ENCODE measurements at regions of chr4 and their contacts with region 1.

Region 1: GRCh38 chr4:99847362-99847976 is 30.8 kb downstream of the DAPP1 start:
- DNase-seq: peak in 1 of 35 experiments; percentile 49
- ATAC-seq: peak in 3 of 4 experiments; percentile 44 to 60 (median 59)
- H3K4me3 ChIP-seq: no peak overlapping the region
- H3K4me3 Mint-ChIP-seq: peak overlapping the region; percentile 43 to 61 (median 50)
- H3K27ac ChIP-seq: peak overlapping the region; percentile 62
- H3K27ac Mint-ChIP-seq: peak overlapping the region; percentile 86 to 95
- H3K4me1 ChIP-seq: peaks cover 28 to 33% of the 10 kb centered on the region in 2 experiments
- H3K4me1 Mint-ChIP-seq: peaks cover 43 to 64% (median 51%) of the 10 kb centered on the region in 3 donors
- H3K27me3 ChIP-seq: no peaks in the 10 kb centered on the region
- H3K27me3 Mint-ChIP-seq: no peaks in the 10 kb centered on the region

Region 2: DNA sequence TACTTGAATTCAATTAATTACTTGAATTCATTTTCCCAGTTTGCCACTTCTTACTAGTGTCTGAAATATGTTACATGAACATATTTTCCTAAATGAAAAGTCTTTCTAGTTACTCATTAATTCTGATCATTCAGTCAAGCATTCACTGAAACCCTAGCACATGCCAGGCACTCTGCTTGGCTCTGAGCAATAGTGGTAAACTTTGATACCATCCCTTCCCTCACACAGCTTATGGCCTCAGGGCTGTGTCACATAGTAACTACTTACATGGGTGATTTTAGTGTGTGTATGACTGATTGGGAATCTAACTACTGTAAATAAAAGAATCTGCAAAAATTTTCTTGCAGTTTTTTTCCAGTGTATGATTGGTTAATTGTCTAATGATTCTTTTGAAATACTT is 819.3 kb before region 1 on chr4:
- CTCF ChIA-PET with region 1: no interaction called
- POLR2A ChIA-PET with region 1: no interaction called
- DNase-seq: no peak
- ATAC-seq: no peak
- H3K4me3 ChIP-seq: no peak overlapping the region
- H3K4me3 Mint-ChIP-seq: no peak overlapping the region
- H3K27ac ChIP-seq: no peak overlapping the region
- H3K27ac Mint-ChIP-seq: no peak overlapping the region
- H3K4me1 ChIP-seq: peaks cover 0 to 4% of the 10 kb centered on the region in 2 experiments
- H3K4me1 Mint-ChIP-seq: peaks cover 73 to 88% (median 79%) of the 10 kb centered on the region in 3 donors
- H3K27me3 ChIP-seq: no peaks in the 10 kb centered on the region
- H3K27me3 Mint-ChIP-seq: no peaks in the 10 kb centered on the region

Region 3: GRCh38 chr4:99088481-99089365 is 758.7 kb before region 1 on chr4 and contains the start of gene ADH5:
- CTCF ChIA-PET with region 1: no interaction called
- POLR2A ChIA-PET with region 1: interaction called in 1 of 2 experiments, 12 read pairs
- DNase-seq: peak; percentile 77 to 94 (median 88)
- ATAC-seq: peak; percentile 93 to 99 (median 96)
- H3K4me3 ChIP-seq: peak within 1 kb of the TSS; percentile 92 to 93
- H3K4me3 Mint-ChIP-seq: peak within 1 kb of the TSS; percentile 97 to 99 (median 97)
- H3K27ac ChIP-seq: peak within 1 kb of the TSS; percentile 89
- H3K27ac Mint-ChIP-seq: peak within 1 kb of the TSS; percentile 99 to 100
- H3K4me1 ChIP-seq: peaks cover 15 to 30% of the 10 kb centered on the region in 2 experiments
- H3K4me1 Mint-ChIP-seq: peaks cover 54 to 67% (median 61%) of the 10 kb centered on the region in 3 donors
- H3K27me3 ChIP-seq: no peaks in the 10 kb centered on the region
- H3K27me3 Mint-ChIP-seq: no peaks in the 10 kb centered on the region
- total RNA-seq, gene ADH5: 51.1 to 80.6 (median 70.5) TPM

Region 4: DNA sequence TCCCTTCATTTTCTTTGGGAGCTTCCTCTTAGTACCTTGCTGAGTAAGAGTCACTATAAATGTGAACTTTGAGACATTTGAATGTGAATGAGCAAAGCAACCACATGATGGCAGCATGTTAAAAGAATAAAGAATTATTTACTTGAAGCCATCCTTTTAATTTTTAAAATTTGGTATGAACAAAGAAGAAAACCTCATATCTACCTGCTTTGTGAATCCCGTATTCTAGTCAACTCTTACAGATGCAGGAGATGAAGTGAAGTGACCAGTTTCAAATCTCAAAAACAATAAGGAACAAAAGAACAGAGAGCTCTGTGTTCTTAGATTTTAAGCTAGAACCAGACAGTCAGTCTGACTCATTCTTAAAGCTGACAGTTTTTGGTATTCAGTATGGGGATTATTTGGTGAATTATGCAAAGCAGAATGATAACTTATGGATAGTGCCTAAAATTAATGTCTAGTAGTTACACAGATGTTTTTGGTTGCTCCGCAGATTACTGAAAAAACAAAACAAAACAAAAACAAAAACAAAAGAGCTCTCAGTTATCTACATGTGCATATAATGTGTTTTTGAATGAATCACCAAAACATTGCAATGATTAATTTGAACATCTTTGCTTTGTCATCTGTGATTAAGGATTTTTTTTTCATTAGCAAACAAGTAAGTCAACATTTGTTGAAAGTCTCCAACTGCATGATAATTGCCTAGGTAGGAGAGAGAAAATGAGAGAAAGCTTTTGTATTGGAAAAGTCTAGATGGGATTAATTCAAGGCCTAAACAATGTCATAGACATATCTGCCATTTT is 150.8 kb after region 1 on chr4:
- CTCF ChIA-PET with region 1: no interaction called
- POLR2A ChIA-PET with region 1: no interaction called
- DNase-seq: peak in 1 of 35 experiments; percentile 23
- ATAC-seq: no peak
- H3K4me3 ChIP-seq: no peak overlapping the region
- H3K4me3 Mint-ChIP-seq: no peak overlapping the region
- H3K27ac ChIP-seq: no peak overlapping the region
- H3K27ac Mint-ChIP-seq: no peak overlapping the region
- H3K4me1 ChIP-seq: no peaks in the 10 kb centered on the region
- H3K4me1 Mint-ChIP-seq: no peaks in the 10 kb centered on the region
- H3K27me3 ChIP-seq: no peaks in the 10 kb centered on the region
- H3K27me3 Mint-ChIP-seq: no peaks in the 10 kb centered on the region